Natural killer cell (primary cell): ENCODE measurements at regions of chr2 and their contacts with region 1.

Region 1: GRCh38 chr2:157124731-157125130 is 132.8 kb upstream of the GALNT5 start:
- DNase-seq: no peak
- ATAC-seq: no peak
- H3K4me3 ChIP-seq: no peak overlapping the region
- H3K4me3 Mint-ChIP-seq: no peak overlapping the region
- H3K27ac ChIP-seq: no peak overlapping the region
- H3K27ac Mint-ChIP-seq: no peak overlapping the region
- H3K4me1 ChIP-seq: no peaks in the 10 kb centered on the region
- H3K4me1 Mint-ChIP-seq: no peaks in the 10 kb centered on the region
- H3K27me3 ChIP-seq: no peaks in the 10 kb centered on the region
- H3K27me3 Mint-ChIP-seq: no peaks in the 10 kb centered on the region
- CTCF ChIP-seq: no peak

Region 2: DNA sequence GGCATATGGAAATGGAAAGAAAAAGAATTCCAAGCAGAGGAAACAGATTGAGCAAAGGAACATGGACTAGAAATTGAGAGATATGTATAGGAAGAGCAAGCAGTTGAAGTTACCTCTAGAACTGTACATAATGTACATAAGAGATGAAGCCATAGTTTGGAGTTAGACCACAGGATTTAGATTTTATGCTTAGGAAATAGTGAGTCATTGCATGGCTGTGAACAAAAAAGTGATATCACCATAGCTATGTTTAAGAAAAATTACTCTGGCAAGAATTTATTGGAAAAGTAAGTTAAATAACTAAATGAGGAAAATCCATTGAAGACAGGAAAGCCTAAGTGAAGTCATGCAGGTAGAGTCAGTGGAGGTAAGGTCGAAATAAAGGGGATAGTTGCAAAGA is 33.4 kb after region 1 on chr2:
- intact Hi-C with region 1: loop called (anchors 1 kb)
- DNase-seq: no peak
- ATAC-seq: no peak
- H3K4me3 ChIP-seq: no peak overlapping the region
- H3K4me3 Mint-ChIP-seq: no peak overlapping the region
- H3K27ac ChIP-seq: no peak overlapping the region
- H3K27ac Mint-ChIP-seq: no peak overlapping the region
- H3K4me1 ChIP-seq: no peaks in the 10 kb centered on the region
- H3K4me1 Mint-ChIP-seq: no peaks in the 10 kb centered on the region
- H3K27me3 ChIP-seq: no peaks in the 10 kb centered on the region
- H3K27me3 Mint-ChIP-seq: no peaks in the 10 kb centered on the region
- CTCF ChIP-seq: no peak

Region 3: DNA sequence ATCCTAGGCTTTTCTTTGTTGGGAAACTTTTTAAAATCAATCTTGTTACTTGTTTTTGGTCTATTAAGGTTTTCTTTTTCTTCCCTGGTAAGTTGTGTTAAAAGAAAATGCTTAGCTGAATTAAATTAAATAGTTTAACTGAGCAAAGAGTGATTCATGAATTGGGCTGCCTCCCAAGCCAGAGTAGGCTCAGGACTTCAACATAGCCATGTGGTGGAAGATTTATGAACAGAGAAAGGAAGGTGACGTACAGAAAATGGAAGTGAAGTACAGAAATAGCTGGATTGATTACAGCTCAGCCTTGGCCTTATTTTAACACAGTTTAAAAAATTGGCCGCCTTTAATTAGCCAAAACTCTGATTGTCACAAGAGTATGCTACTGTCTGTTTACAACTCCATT is 104.8 kb after region 1 on chr2:
- intact Hi-C with region 1: no loop called
- DNase-seq: no peak
- ATAC-seq: no peak
- H3K4me3 ChIP-seq: no peak overlapping the region
- H3K4me3 Mint-ChIP-seq: no peak overlapping the region
- H3K27ac ChIP-seq: no peak overlapping the region
- H3K27ac Mint-ChIP-seq: no peak overlapping the region
- H3K4me1 ChIP-seq: no peaks in the 10 kb centered on the region
- H3K4me1 Mint-ChIP-seq: no peaks in the 10 kb centered on the region
- H3K27me3 ChIP-seq: peaks cover 2% of the 10 kb centered on the region
- H3K27me3 Mint-ChIP-seq: peaks cover 0 to 2% of the 10 kb centered on the region in 2 donors
- CTCF ChIP-seq: no peak